Psoas muscle (tissue), 8 donors: ENCODE measurements at regions of chr6 and their contacts with region 1.

Region 1: DNA sequence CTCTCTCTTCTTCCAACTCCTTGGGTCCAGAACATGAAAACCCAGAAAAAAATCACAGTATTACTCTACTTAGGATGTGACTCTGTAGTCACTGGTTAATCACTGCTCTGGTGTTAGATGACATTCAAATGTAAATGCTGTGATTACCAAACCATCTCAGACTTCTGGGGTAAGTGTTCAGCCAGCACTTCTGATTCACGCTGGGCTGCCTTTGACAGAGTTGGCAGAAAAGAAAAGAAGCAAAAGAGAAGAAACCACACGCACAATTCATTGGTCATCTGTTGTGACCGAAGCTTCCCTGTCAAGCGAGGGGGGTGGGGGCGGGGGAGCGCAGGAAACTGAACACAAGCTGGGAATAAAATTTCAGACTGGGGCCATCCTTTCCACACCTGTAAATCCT is 82.7 kb downstream of the PSMG4 start:
- DNase-seq: peak; percentile 60 to 73
- ATAC-seq: peak; percentile 65 to 84 (median 72)
- H3K4me3 ChIP-seq: no peak overlapping the region
- H3K27ac ChIP-seq: peak overlapping the region; percentile 72
- H3K4me1 ChIP-seq: peaks cover 59% of the 10 kb centered on the region
- H3K27me3 ChIP-seq: no peaks in the 10 kb centered on the region
- CTCF ChIP-seq: no peak

Region 2: GRCh38 chr6:3226848-3227362 is 114.6 kb before region 1 on chr6:
- intact Hi-C with region 1: no loop called
- DNase-seq: peak; percentile 27 to 63
- ATAC-seq: peak in 3 of 4 donors; percentile 24 to 46 (median 45)
- H3K4me3 ChIP-seq: peak overlapping the region; percentile 64
- H3K27ac ChIP-seq: no peak overlapping the region
- H3K4me1 ChIP-seq: peaks cover 36% of the 10 kb centered on the region
- H3K27me3 ChIP-seq: peaks cover 0 to 59% (median 23%) of the 10 kb centered on the region in 3 donors
- CTCF ChIP-seq: no peak

Region 3: DNA sequence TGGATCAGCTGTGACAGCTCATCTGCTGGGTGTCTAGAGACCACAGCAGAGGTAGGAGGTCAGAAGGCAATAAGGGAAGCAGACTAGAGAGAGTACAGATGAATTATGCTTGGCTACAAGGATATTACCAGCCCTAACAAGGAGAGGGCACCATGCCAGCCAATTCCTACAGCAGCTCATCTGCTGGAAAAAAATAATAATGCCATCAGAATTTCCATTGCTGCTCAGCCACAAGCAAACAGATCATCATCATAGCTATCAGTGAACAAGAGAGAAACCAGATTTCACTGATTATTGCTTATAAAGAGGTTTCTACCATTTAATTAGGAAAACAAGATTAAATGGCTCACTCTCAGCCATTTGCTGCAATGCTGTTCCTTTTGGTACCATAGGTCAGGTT is 16.3 kb before region 1 on chr6:
- intact Hi-C with region 1: loop called in 1 of 2 experiments (anchors 1 kb)
- DNase-seq: no peak
- ATAC-seq: no peak
- H3K4me3 ChIP-seq: no peak overlapping the region
- H3K27ac ChIP-seq: peak overlapping the region; percentile 50
- H3K4me1 ChIP-seq: peaks cover 35% of the 10 kb centered on the region
- H3K27me3 ChIP-seq: no peaks in the 10 kb centered on the region
- CTCF ChIP-seq: no peak

Region 4: GRCh38 chr6:3410385-3411360 is 69.2 kb after region 1 on chr6:
- intact Hi-C with region 1: loop called in 1 of 2 experiments (anchors 5 kb)
- DNase-seq: peak in 1 of 2 donors; percentile 57
- ATAC-seq: peak in 2 of 4 donors; percentile 59
- H3K4me3 ChIP-seq: no peak overlapping the region
- H3K27ac ChIP-seq: no peak overlapping the region
- H3K4me1 ChIP-seq: peaks cover 32% of the 10 kb centered on the region
- H3K27me3 ChIP-seq: no peaks in the 10 kb centered on the region
- CTCF ChIP-seq: peak; percentile 72

Region 5: GRCh38 chr6:3456755-3457466 is 115.4 kb after region 1 on chr6 and contains the start of gene SLC22A23:
- intact Hi-C with region 1: loop called in 1 of 2 experiments (anchors 5 kb)
- DNase-seq: peak; percentile 76 to 88
- ATAC-seq: peak; percentile 90 to 92 (median 90)
- H3K4me3 ChIP-seq: peak within 1 kb of the TSS; percentile 78
- H3K27ac ChIP-seq: peak within 1 kb of the TSS; percentile 80
- H3K4me1 ChIP-seq: peaks cover 7% of the 10 kb centered on the region
- H3K27me3 ChIP-seq: no peaks in the 10 kb centered on the region
- CTCF ChIP-seq: peak; percentile 74
- total RNA-seq, gene SLC22A23: 8.7 to 13.7 (median 13.2) TPM